Activated T-helper 1 cell treated with anti-CD3 and anti-CD28 coated beads, Interleukin-12 subunit alpha, Interleukin-12 subunit beta, Interleukin-2, Interleukin-4 antibody, amounts not matched to agents 30 ng/mL and 10 ng/mL and 1 ng/mL, durations not matched to agents 14 hours and 24 hours and 36 hours (primary cell): ENCODE measurements at regions of chr10 and their contacts with region 1.

Region 1: GRCh38 chr10:8130973-8131911 is 76.8 kb downstream of the GATA3 start:
- DNase-seq: peak; percentile 50
- H3K4me3 Mint-ChIP-seq: peak overlapping the region; percentile 61
- H3K27ac Mint-ChIP-seq: peak overlapping the region; percentile 90
- H3K4me1 Mint-ChIP-seq: peaks cover 62% of the 10 kb centered on the region
- H3K27me3 Mint-ChIP-seq: peaks cover 5% of the 10 kb centered on the region

Region 2: GRCh38 chr10:8065651-8066050 is 65.6 kb before region 1 on chr10:
- intact Hi-C with region 1: loop called (anchors 1 kb)
- DNase-seq: no peak
- H3K4me3 Mint-ChIP-seq: peak overlapping the region; percentile 77
- H3K27ac Mint-ChIP-seq: peak overlapping the region; percentile 88
- H3K4me1 Mint-ChIP-seq: peaks cover 92% of the 10 kb centered on the region
- H3K27me3 Mint-ChIP-seq: peaks cover 2% of the 10 kb centered on the region

Region 3: DNA sequence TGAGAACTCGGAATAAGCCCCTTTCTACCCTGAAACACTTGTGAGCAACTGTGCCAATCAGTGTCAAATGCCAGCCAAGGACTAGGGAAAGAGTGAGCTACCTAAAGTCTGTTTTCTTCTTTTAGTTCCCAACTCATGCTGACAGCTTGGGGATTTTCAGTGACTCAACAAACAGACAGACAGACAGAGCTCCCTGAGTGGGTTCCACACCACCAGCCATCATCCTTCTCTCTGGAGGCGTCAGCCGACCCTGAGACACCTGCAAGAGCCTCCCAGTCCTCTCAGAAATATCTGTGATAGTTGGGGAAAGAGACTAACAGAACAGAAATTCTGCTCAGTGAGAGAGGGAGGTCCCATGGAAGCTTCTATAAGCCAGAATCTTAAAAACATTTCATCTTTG is 27.2 kb before region 1 on chr10:
- intact Hi-C with region 1: loop called (anchors 2 kb)
- DNase-seq: no peak
- H3K4me3 Mint-ChIP-seq: no peak overlapping the region
- H3K27ac Mint-ChIP-seq: no peak overlapping the region
- H3K4me1 Mint-ChIP-seq: peaks cover 10% of the 10 kb centered on the region
- H3K27me3 Mint-ChIP-seq: peaks cover 5% of the 10 kb centered on the region

Region 4: DNA sequence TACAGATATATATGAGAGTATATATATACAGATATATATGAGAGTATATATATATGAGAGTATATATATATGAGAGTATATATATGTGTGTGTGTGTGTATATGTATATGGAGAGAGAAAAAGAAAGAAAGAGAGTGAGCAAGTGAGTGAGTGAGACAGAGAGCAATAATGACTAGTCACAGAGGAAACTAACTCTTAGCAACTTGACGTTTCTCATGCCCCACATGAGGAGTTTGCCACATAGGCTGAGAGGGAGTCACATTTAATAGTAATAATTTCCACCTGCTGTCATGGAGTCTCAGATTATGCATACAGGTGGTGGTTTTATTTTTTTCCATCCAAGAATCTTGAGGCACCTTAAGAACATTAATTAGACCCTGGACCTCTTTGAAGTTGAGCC is 123.1 kb after region 1 on chr10:
- intact Hi-C with region 1: loop called (anchors 1 kb)
- DNase-seq: no peak
- H3K4me3 Mint-ChIP-seq: peak overlapping the region; percentile 38
- H3K27ac Mint-ChIP-seq: peak overlapping the region; percentile 77
- H3K4me1 Mint-ChIP-seq: peaks cover 48% of the 10 kb centered on the region
- H3K27me3 Mint-ChIP-seq: no peaks in the 10 kb centered on the region

Region 5: DNA sequence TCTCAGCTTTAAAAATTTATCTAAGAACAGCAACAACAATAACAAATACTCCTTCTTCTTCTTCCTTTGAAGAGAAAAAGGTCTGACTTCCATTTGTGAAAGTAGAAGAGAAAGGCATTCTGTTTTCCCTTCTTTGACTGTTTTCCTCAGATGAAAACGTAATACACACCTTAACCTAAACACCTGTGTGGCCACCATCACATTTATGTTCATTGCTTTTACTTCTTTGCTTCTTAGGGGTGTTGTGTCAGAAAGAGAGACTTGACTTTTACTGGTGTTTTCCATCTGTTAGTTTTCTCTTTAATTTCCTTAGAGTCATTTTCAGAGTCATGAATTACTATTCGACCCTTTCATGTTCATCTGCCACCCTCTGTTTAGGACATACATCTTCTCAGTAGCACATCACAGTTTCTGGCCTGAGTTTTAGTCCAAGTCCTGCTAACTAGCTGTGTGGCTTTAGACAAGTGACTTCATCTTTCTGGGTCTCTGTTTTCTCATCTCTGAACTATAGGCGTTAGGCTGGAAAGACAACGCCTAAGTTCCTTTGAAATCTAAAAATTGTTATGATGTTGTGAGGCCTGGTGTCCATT is 207.0 kb after region 1 on chr10:
- intact Hi-C with region 1: loop called (anchors 1 kb)
- DNase-seq: no peak
- H3K4me3 Mint-ChIP-seq: no peak overlapping the region
- H3K27ac Mint-ChIP-seq: peak overlapping the region; percentile 90
- H3K4me1 Mint-ChIP-seq: peaks cover 25% of the 10 kb centered on the region
- H3K27me3 Mint-ChIP-seq: peaks cover 19% of the 10 kb centered on the region

Region 6: DNA sequence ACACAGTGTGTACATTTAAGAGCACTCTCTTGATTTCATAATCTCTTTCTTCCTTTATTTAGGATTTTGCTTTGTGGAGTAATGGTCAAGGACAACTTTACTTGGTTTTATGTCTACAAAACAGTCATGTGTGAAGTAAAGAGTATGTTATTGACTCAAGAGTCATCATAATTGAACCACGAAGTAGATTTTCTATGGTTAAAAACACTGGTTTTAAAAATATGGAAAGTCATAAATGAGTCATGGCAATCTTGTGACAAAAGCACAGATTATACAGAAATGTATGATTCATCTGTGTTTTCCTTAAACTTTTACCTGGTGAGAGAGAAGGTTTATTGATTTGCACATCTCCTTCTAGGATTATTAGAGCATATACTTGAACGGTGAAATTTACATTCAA is 893.0 kb after region 1 on chr10:
- intact Hi-C with region 1: loop called (anchors 10 kb)
- DNase-seq: no peak
- H3K4me3 Mint-ChIP-seq: no peak overlapping the region
- H3K27ac Mint-ChIP-seq: peak overlapping the region; percentile 6
- H3K4me1 Mint-ChIP-seq: peaks cover 7% of the 10 kb centered on the region
- H3K27me3 Mint-ChIP-seq: peaks cover 7% of the 10 kb centered on the region